Vagina (tissue), 2 donors: ENCODE measurements at regions of chr13 and their contacts with region 1.

Region 1: DNA sequence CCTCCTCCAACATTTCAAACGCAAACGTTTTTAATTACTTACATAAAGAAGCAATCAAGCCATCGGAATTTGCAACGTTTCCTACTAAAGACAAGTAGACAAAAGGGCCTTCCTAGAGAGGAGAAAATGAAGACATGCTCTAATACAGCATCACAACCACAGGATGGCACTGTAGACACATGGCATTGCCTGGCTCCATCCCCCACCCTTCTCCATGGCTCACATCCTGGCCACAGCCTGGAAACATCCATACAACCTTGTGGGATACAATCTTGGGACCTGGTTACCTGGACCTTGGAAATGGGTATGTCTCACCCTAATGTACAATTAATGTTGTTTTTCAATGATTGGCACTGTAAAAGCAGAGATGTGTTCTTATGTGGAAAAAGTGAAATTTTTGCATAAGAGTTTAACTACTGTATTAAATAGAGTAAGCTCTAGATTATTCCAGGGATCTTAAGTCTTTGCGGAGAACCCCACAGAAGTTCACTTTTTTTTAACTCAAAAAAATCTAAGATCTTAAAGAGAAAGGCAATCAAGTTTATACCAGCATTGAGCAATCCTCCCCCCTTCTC is 21.5 kb downstream of the EBPL start:
- DNase-seq: no peak
- H3K4me3 ChIP-seq: no peak overlapping the region
- H3K27ac ChIP-seq: no peak overlapping the region
- H3K4me1 ChIP-seq: peaks cover 15% of the 10 kb centered on the region
- H3K27me3 ChIP-seq: no peaks in the 10 kb centered on the region
- CTCF ChIP-seq: peak; percentile 51 to 66 (median 62)
- POLR2A ChIP-seq: no peak

Region 2: GRCh38 chr13:49400755-49401659 is 268.8 kb before region 1 on chr13:
- intact Hi-C with region 1: no loop called
- DNase-seq: no peak
- H3K4me3 ChIP-seq: peak overlapping the region; percentile 38 to 43
- H3K27ac ChIP-seq: peak overlapping the region; percentile 83
- H3K4me1 ChIP-seq: peaks cover 36% of the 10 kb centered on the region
- H3K27me3 ChIP-seq: no peaks in the 10 kb centered on the region
- CTCF ChIP-seq: no peak
- POLR2A ChIP-seq: peak in 1 of 2 donors; percentile 18

Region 3: DNA sequence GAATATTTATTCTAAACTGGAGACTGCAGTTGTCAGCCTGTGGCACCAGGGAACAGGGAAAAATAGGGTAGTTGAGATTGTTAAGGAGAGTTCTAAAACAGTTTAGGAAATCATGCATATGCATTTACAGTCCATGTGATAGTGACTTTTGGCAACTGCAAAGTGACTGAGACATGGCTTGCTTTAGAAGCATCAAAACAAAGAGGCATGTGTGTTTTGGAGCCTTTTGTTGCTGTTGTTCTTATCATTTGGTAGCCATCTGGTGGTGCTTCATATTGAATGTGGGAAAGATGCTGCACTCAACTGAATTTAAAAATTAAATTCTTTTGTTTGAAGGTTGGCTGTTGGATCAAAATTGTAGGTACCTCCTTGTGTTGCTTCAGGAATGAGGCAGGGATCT is 31.7 kb after region 1 on chr13:
- intact Hi-C with region 1: no loop called
- DNase-seq: no peak
- H3K4me3 ChIP-seq: no peak overlapping the region
- H3K27ac ChIP-seq: no peak overlapping the region
- H3K4me1 ChIP-seq: no peaks in the 10 kb centered on the region
- H3K27me3 ChIP-seq: no peaks in the 10 kb centered on the region
- CTCF ChIP-seq: no peak
- POLR2A ChIP-seq: no peak

Region 4: GRCh38 chr13:49840266-49840665 is 170.4 kb after region 1 on chr13:
- intact Hi-C with region 1: loop called (anchors 5 kb)
- DNase-seq: no peak
- H3K4me3 ChIP-seq: no peak overlapping the region
- H3K27ac ChIP-seq: no peak overlapping the region
- H3K4me1 ChIP-seq: no peaks in the 10 kb centered on the region
- H3K27me3 ChIP-seq: no peaks in the 10 kb centered on the region
- CTCF ChIP-seq: no peak
- POLR2A ChIP-seq: no peak